BJ (cell line): ENCODE measurements at regions of chr6 and their contacts with region 1.

Region 1: DNA sequence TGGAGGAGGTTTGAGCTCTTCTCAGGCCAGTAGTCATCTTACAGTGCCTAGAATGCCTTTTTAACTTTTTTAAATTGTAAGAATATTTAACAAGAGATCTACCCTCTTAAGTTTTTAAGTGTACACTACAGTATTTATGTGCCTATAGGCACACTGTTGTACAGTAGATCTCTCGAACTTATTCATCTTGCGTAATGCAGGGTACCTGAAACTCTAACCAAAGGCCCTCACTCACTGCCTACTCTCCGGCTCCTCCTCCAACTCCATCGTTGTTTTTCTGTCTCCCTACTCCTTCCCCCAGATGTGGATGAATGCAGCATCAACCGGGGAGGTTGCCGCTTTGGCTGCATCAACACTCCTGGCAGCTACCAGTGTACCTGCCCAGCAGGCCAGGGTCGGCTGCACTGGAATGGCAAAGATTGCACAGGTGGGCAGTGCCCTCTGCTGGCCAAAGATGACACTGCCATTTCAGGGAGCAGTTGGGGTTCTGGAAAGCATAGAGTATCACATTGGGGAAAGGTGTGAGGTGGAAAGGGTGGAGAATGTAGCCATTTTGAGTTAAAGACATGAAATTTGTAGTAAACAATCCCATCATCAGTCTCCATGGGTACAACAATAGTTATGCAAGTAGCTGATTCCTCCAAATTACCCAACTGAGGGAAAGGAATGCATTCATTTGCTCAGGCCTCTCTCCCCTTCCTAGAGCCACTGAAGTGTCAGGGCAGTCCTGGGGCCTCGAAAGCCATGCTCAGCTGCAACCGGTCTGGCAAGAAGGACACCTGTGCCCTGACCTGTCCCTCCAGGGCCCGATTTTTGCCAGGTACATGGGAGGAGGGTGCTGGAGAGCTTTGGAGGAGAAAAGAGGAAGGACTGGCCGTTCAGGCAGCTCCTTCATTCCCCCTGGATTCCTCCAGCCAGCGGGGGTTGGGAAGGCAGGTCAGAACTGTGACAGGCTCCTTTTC is 18.4 kb upstream of the ZNF76 start:
- DNase-seq: no peak
- H3K4me3 ChIP-seq: no peak overlapping the region
- H3K27me3 ChIP-seq: no peaks in the 10 kb centered on the region
- CTCF ChIP-seq: peak; percentile 96

Region 2: GRCh38 chr6:35139908-35140655 is 101.0 kb before region 1 on chr6:
- CTCF ChIA-PET with region 1: interaction called, 119 read pairs
- POLR2A ChIA-PET with region 1: no interaction called
- DNase-seq: no peak
- H3K4me3 ChIP-seq: no peak overlapping the region
- H3K27me3 ChIP-seq: no peaks in the 10 kb centered on the region
- CTCF ChIP-seq: peak; percentile 74

Region 3: DNA sequence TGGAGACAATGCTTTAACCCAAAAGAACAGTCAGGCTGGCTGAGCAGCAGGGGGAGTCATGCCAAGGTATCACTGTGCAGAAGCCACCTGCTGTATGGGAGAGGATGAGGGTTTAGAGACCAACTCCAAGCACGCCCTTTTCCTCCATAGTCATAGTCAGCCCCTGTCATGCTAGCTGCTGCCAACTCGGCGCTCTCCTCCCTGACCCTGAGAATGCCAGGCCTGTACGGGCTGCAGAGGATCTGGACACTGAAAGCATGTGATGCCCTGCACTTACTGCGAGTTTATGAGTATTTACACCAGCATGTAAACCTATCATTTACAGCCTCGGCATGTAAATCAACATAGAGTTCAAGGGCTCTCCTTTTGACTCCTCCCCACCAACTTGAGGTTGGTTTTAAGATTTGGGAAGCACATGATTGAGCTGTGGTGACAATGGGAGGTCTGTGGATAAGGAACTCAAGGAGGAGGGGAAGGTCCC is 39.0 kb before region 1 on chr6:
- CTCF ChIA-PET with region 1: interaction called, 65 read pairs
- POLR2A ChIA-PET with region 1: no interaction called
- DNase-seq: no peak
- H3K4me3 ChIP-seq: no peak overlapping the region
- H3K27me3 ChIP-seq: no peaks in the 10 kb centered on the region
- CTCF ChIP-seq: no peak

Region 4: DNA sequence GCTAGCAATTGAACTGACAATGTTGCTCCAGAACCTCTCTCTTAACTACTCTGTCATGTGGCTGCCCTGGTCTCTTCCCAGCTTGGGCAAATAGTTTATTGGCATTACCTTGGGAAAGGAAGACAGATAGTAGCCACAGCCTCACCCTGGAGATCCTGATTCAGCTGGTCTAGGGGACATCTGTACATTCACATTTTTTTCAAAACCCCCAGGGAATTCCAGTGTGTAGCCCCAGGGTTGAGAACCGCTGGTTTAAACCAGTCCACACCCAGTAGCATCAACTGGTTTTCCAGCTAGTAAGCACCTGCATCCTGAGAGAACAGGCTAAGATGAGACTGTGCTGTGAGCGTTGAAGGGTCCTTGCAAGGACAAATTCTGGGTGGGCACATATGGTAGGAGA is 17.7 kb before region 1 on chr6:
- CTCF ChIA-PET with region 1: interaction called, 83 read pairs
- POLR2A ChIA-PET with region 1: no interaction called
- DNase-seq: no peak
- H3K4me3 ChIP-seq: no peak overlapping the region
- H3K27me3 ChIP-seq: no peaks in the 10 kb centered on the region
- CTCF ChIP-seq: no peak

Region 5: DNA sequence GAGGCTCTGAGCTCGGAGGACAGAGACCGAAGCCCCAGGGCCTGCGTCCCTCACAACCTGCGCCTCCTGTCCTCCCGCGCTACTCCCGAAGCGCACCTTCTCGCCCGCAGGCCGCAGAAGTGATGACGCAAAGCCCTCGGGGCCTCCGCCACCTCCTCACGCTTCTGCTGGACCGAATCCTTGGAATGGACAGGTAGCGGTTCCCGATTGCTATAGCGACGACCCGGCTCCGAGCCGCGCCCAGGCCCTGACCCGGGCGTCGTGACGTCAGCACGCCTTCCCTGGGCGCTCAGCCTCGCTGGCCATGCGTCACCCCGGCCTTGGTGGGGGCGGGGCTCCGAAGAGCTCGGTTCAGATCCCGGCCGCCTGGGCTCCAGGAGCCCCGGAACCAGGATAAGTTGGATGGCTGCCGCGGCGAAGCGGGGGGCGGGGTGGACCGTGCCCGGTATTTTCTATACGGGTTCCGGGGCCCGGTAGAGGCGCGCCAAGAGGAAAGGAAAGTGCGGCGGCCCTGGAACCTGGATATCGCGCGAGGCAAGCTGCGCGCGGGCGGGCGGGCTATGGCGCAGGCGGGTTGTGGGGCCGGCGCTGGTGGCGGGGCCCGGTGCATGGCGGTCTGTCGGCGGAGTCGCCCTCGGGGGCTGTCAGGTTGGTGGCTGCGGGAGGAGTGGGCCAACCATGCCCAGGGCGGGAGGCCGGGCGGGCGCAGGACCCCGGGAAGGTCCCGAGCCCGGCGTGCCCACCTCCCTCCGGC is 18.2 kb after region 1 on chr6 and contains the start of gene ZNF76:
- CTCF ChIA-PET with region 1: interaction called, 43 read pairs
- POLR2A ChIA-PET with region 1: no interaction called
- DNase-seq: peak; percentile 61
- H3K4me3 ChIP-seq: peak within 1 kb of the TSS; percentile 93
- H3K27me3 ChIP-seq: no peaks in the 10 kb centered on the region
- CTCF ChIP-seq: no peak
- polyA plus RNA-seq, gene ZNF76: 13.7 and 23.3 TPM in 2 replicates